ENCODE measurements at regions of chrX and their contacts with region 1.

Region 1: GRCh38 chrX:81259714-81260395 is 58.0 kb downstream of the SH3BGRL start:
- DNase-seq: no peak
- ATAC-seq: no peak
- H3K4me3 ChIP-seq: no peak overlapping the region
- H3K27ac ChIP-seq: peak overlapping the region in 5 of 12 donors; percentile 6 to 73 (median 41)
- H3K4me1 ChIP-seq: peaks cover 0 to 21% (median 0%) of the 10 kb centered on the region in 12 donors
- H3K27me3 ChIP-seq: no peaks in the 10 kb centered on the region
- CTCF ChIP-seq: no peak
- POLR2A ChIP-seq: no peak

Region 2: GRCh38 chrX:81201671-81202455 is 58.0 kb before region 1 on chrX and contains the starts of genes HMGN5 and SH3BGRL:
- intact Hi-C with region 1: loop called in 1 of 10 experiments (anchors 10 kb)
- DNase-seq: peak; percentile 78 to 84 (median 81)
- ATAC-seq: peak; percentile 90 to 99 (median 98)
- H3K4me3 ChIP-seq: peak within 1 kb of the TSS; percentile 2 to 87 (median 59)
- H3K27ac ChIP-seq: peak within 1 kb of the TSS; percentile 36 to 82 (median 72)
- H3K4me1 ChIP-seq: peaks cover 0 to 13% (median 0%) of the 10 kb centered on the region in 12 donors
- H3K27me3 ChIP-seq: no peaks in the 10 kb centered on the region
- CTCF ChIP-seq: no peak
- POLR2A ChIP-seq: peak in 1 of 2 donors; percentile 20
- total RNA-seq, gene HMGN5: 0.56 to 3.8 (median 2.1) TPM
- total RNA-seq, gene SH3BGRL: 16.4 to 96.1 (median 26.9) TPM